ENCODE measurements at regions of chr18 and their contacts with region 1.

Region 1: GRCh38 chr18:61502472-61502871 is 169.2 kb downstream of the CDH20 start:
- DNase-seq: peak; percentile 68
- ATAC-seq: peak; percentile 68
- H3K4me3 ChIP-seq: no peak overlapping the region
- H3K27ac ChIP-seq: no peak overlapping the region
- H3K4me1 ChIP-seq: no peaks in the 10 kb centered on the region
- H3K27me3 ChIP-seq: peaks cover 32% of the 10 kb centered on the region
- CTCF ChIP-seq: peak; percentile 74

Region 2: GRCh38 chr18:60668583-60668982 is 833.9 kb before region 1 on chr18:
- CTCF ChIA-PET with region 1: no interaction called
- POLR2A ChIA-PET with region 1: no interaction called
- intact Hi-C with region 1: loop called (anchors 5 kb)
- DNase-seq: peak; percentile 25
- ATAC-seq: no peak
- H3K4me3 ChIP-seq: no peak overlapping the region
- H3K27ac ChIP-seq: no peak overlapping the region
- H3K4me1 ChIP-seq: no peaks in the 10 kb centered on the region
- H3K27me3 ChIP-seq: peaks cover 11% of the 10 kb centered on the region
- CTCF ChIP-seq: peak; percentile 54

Region 3: DNA sequence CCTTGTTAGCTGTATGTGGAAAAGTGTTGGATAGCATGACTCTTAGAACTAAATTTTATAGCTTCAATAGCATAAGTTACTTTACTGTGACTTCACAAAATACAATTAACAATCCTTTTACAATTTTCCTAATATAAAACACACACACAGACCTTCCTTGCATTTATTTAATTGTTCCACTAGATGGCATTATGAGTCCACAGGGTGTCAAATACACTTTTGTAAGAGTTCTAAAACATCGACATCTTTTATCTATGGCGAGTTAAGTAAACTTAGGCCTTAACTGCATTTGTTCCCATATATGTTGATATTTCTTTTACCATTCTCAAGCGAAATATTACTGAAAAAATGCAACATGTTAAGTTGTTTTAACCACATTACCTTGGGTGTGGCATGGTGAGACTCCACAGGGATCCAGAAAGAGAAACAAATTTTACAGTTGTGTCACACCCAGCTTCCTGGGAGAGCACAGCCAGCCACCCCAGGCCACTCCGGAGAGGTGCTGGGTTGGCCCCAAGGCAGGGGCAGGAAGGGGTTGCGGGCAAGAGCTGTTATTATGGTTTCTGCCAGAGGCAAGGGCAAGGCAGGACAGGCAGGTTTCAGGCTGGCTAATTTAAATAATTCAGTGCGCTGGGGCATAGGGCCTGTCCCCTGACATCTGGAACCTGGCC is 817.5 kb before region 1 on chr18:
- CTCF ChIA-PET with region 1: no interaction called
- POLR2A ChIA-PET with region 1: no interaction called
- intact Hi-C with region 1: loop called (anchors 1 kb)
- DNase-seq: peak; percentile 42
- ATAC-seq: peak; percentile 61
- H3K4me3 ChIP-seq: no peak overlapping the region
- H3K27ac ChIP-seq: no peak overlapping the region
- H3K4me1 ChIP-seq: no peaks in the 10 kb centered on the region
- H3K27me3 ChIP-seq: peaks cover 29% of the 10 kb centered on the region
- CTCF ChIP-seq: peak; percentile 82

Region 4: GRCh38 chr18:60809937-60810336 is 692.5 kb before region 1 on chr18:
- CTCF ChIA-PET with region 1: no interaction called
- POLR2A ChIA-PET with region 1: no interaction called
- intact Hi-C with region 1: loop called (anchors 1 kb)
- DNase-seq: no peak
- ATAC-seq: no peak
- H3K4me3 ChIP-seq: no peak overlapping the region
- H3K27ac ChIP-seq: no peak overlapping the region
- H3K4me1 ChIP-seq: no peaks in the 10 kb centered on the region
- H3K27me3 ChIP-seq: 0 out of 2 replicates have a peak, but pooled peaks cover 11% of the 10 kb centered on the region
- CTCF ChIP-seq: no peak

Region 5: DNA sequence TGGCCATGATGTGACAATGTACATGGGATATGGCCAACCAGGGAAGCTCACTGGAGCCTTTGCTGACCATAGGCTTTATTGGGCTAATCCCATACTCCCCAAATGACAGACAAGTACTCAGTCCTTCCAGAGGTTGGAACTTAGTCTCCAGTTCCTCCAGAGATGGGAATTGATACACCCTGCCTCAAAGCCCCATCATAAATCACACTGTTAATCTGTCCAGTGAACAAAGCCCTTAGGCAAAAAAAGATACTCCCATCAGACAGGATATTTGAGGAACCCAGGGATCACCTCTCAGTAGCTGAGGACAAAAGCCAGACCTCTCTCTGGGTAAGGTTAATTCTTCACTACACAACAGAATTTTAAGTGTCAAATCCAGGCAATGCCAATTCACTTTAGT is 416.7 kb before region 1 on chr18:
- CTCF ChIA-PET with region 1: no interaction called
- POLR2A ChIA-PET with region 1: no interaction called
- intact Hi-C with region 1: loop called (anchors 5 kb)
- DNase-seq: no peak
- ATAC-seq: no peak
- H3K4me3 ChIP-seq: no peak overlapping the region
- H3K27ac ChIP-seq: no peak overlapping the region
- H3K4me1 ChIP-seq: no peaks in the 10 kb centered on the region
- H3K27me3 ChIP-seq: no peaks in the 10 kb centered on the region
- CTCF ChIP-seq: no peak

Region 6: DNA sequence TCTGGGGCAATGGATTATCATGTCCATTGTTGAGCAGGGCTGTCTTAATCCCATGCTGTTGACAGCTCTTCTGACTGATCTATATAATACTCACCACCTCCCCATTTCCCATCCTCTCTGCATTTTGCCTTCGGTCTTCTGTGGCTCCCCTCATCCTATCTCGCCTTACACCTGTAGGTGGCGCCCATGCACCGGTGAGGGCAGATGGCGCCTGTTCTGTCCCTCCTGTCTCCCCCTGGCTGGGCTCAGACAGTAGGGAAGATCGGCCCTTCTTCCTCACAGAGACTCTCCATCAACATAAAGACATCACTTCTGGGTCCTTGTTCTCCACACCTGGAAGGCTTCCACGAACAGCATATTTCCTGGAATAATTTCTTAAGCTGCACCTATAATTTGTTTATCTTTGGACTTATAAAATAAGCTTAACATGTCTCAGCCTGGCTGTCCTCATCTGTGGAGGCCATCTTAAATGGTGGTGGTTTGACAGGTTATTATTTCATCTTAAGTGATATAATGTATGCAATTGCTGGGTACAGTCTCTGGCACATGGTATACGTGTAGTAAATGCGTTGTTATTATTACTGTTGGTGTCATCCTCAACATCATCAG is 180.1 kb before region 1 on chr18:
- CTCF ChIA-PET with region 1: interaction called, 11 read pairs
- POLR2A ChIA-PET with region 1: no interaction called
- intact Hi-C with region 1: loop called (anchors 1 kb)
- DNase-seq: peak; percentile 66
- ATAC-seq: peak; percentile 80
- H3K4me3 ChIP-seq: no peak overlapping the region
- H3K27ac ChIP-seq: no peak overlapping the region
- H3K4me1 ChIP-seq: no peaks in the 10 kb centered on the region
- H3K27me3 ChIP-seq: 0 out of 2 replicates have a peak, but pooled peaks cover 4% of the 10 kb centered on the region
- CTCF ChIP-seq: peak; percentile 85

Measured in PC-3 (cell line).